Activated naive CD4-positive, alpha-beta T cell treated with anti-CD3 and anti-CD28 coated beads for 36 hours (primary cell): ENCODE measurements at regions of chr5 and their contacts with region 1.

Region 1: DNA sequence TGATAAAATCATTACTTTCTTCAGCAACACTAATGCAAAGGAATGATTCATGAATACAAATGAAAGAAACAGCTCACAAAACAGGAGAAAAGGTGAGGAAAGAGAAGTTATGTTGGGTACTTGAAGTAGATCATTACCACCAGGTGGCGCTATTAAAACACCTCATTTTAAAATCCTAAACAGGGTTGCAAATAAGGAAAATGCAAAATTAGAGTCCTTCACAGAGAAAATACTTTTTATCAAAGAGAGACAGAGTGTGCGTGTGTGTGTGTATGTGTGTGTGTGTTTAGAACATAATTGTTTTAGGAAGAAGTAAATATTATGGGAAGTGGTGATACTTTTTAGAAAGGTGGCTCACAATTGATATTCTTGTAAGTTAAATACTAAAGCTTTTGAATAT is 49.5 kb upstream of the CD180 start:
- DNase-seq: no peak
- H3K4me3 Mint-ChIP-seq: no peak overlapping the region
- H3K27ac Mint-ChIP-seq: no peak overlapping the region
- H3K4me1 Mint-ChIP-seq: peaks cover 8% of the 10 kb centered on the region
- H3K27me3 Mint-ChIP-seq: no peaks in the 10 kb centered on the region

Region 2: GRCh38 chr5:67059744-67060490 is 186.2 kb before region 1 on chr5:
- CTCF ChIA-PET with region 1: no interaction called
- intact Hi-C with region 1: no loop called
- DNase-seq: no peak
- H3K4me3 Mint-ChIP-seq: no peak overlapping the region
- H3K27ac Mint-ChIP-seq: no peak overlapping the region
- H3K4me1 Mint-ChIP-seq: peaks cover 13% of the 10 kb centered on the region
- H3K27me3 Mint-ChIP-seq: no peaks in the 10 kb centered on the region

Region 3: GRCh38 chr5:67395790-67396418 is 149.8 kb after region 1 on chr5:
- CTCF ChIA-PET with region 1: interaction called, 6 read pairs
- intact Hi-C with region 1: loop called (anchors 1 kb)
- DNase-seq: no peak
- H3K4me3 Mint-ChIP-seq: no peak overlapping the region
- H3K27ac Mint-ChIP-seq: no peak overlapping the region
- H3K4me1 Mint-ChIP-seq: no peaks in the 10 kb centered on the region
- H3K27me3 Mint-ChIP-seq: no peaks in the 10 kb centered on the region

Region 4: DNA sequence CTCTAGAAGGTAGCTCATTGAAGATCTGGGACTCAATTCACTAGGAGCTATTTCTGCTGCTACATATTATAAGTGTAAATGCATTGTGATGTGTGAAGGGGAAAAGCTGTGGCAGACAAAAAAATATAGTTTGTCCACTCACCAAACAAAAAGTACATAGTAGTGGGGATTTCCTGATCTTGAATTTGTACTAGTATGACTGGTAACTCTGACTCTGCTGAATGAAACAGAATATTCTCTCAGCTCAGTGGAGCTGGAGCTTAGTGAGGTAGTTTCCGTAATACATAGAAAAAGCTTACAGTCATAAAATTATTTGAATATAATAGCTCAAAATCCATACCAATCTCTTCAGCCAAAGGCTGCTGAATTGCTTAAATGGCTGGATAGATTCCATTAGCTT is 406.1 kb after region 1 on chr5:
- CTCF ChIA-PET with region 1: no interaction called
- intact Hi-C with region 1: loop called (anchors 10 kb)
- DNase-seq: no peak
- H3K4me3 Mint-ChIP-seq: no peak overlapping the region
- H3K27ac Mint-ChIP-seq: no peak overlapping the region
- H3K4me1 Mint-ChIP-seq: peaks cover 2% of the 10 kb centered on the region
- H3K27me3 Mint-ChIP-seq: peaks cover 2% of the 10 kb centered on the region

Region 5: DNA sequence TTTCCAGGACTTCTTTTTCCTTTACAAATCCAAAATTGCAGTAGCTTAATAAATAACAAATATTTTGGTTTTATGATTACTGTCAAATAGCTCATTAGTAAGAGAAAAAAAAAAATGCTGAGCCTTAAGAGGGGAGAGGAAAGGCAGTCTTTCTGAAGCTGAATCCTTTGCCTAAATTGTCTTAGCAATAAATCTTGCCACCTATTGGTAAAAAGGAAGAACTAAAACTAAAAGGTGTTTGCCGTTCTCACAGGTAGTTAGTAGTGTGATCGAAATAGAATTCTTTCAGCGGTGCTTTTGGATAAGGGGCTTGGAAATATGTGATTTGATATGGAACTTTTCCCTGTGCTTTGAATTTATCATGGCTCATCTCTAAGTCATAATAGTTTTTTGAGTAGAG is 1000.7 kb after region 1 on chr5:
- CTCF ChIA-PET with region 1: interaction called, 3 read pairs
- intact Hi-C with region 1: loop called (anchors 1 kb)
- DNase-seq: no peak
- H3K4me3 Mint-ChIP-seq: no peak overlapping the region
- H3K27ac Mint-ChIP-seq: no peak overlapping the region
- H3K4me1 Mint-ChIP-seq: peaks cover 71% of the 10 kb centered on the region
- H3K27me3 Mint-ChIP-seq: no peaks in the 10 kb centered on the region

Region 6: DNA sequence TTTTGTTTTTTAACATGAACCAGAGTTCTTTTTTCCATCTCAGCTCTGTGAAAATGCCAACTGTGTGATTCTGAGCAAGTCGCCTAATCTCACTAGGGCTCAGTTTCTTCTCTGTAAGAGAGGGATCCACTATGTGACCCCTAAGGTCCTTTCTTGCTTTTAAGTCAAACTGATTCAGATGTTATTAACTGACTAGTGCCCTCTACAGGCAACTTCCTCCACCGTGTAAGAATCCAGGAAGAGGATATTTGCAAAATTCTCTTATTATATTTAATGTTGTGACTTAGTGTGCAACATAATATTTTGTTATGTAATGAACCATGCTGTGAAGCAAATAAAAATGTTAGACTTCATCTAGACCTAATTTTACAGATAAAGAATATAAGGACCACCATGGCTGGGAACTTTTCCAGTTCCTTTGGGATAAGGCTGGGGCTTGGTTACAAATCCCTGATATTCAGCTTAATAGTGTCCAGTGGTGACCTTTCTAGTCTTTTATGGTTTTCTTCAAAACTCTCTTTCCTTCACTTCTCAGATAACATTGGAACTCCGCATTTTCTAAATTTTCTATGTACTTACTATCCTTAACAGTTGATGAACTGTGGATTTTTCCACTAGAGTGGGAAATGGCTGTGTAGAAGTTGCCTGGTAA is 1214.2 kb after region 1 on chr5:
- CTCF ChIA-PET with region 1: interaction called, 3 read pairs
- intact Hi-C with region 1: loop called (anchors 2 kb)
- DNase-seq: peak; percentile 66
- H3K4me3 Mint-ChIP-seq: no peak overlapping the region
- H3K27ac Mint-ChIP-seq: no peak overlapping the region
- H3K4me1 Mint-ChIP-seq: peaks cover 8% of the 10 kb centered on the region
- H3K27me3 Mint-ChIP-seq: no peaks in the 10 kb centered on the region

Region 7: GRCh38 chr5:68962757-68963484 is 1716.8 kb after region 1 on chr5:
- CTCF ChIA-PET with region 1: interaction called, 3 read pairs
- intact Hi-C with region 1: loop called (anchors 2 kb)
- DNase-seq: peak; percentile 51
- H3K4me3 Mint-ChIP-seq: no peak overlapping the region
- H3K27ac Mint-ChIP-seq: no peak overlapping the region
- H3K4me1 Mint-ChIP-seq: peaks cover 1% of the 10 kb centered on the region
- H3K27me3 Mint-ChIP-seq: no peaks in the 10 kb centered on the region